Activated CD8-positive, alpha-beta T cell treated with anti-CD3 and anti-CD28 coated beads, Interleukin-2, amount 10 ng/mL, durations not matched to agents 7 days and 5 days (primary cell): ENCODE measurements at regions of chr5 and their contacts with region 1.

Region 1: GRCh38 chr5:148998174-148998797 is 64.6 kb downstream of the SH3TC2 start:
- DNase-seq: peak; percentile 51
- ATAC-seq: peak; percentile 51
- H3K4me3 Mint-ChIP-seq: no peak overlapping the region
- H3K27ac Mint-ChIP-seq: no peak overlapping the region
- H3K4me1 Mint-ChIP-seq: no peaks in the 10 kb centered on the region
- H3K27me3 Mint-ChIP-seq: peaks cover 31% of the 10 kb centered on the region

Region 2: DNA sequence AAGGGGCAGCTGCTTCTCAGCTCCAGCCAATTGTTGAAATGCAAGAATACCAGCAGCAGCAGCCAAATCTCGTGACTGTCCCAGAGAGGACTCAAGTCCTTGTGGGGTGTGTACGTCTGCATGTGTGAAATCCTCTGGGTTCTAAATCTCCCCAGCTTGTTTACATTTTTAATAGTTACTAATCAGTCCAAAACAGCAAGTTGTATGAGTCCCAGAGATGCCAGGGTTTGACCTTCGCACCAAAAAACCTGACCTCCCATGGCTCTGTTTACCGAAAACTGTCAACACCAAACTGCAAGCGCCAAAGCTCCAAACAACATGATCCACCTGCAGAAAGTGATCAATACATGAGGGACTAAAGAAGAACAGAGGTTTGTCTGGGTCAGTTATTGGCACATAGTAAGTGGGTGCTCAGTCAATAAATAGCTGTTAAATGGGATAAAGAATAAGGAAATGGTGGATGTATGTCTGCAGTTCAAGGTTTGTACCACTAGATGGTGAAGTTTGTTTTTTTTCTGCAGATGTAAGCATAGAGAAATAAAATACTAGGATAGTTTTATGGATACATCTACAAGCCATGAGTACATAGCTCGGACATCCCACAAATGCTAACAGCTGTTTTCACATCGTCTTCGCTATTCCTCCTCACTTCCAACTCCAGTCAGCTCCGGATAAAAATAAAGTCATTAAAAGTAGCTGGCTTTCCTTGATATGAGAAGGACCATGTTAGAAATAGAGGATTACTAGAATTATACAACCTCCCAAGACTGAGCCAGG is 257.1 kb before region 1 on chr5:
- CTCF ChIA-PET with region 1: interaction called, 94 read pairs
- POLR2A ChIA-PET with region 1: no interaction called
- DNase-seq: no peak
- ATAC-seq: no peak
- H3K4me3 Mint-ChIP-seq: no peak overlapping the region
- H3K27ac Mint-ChIP-seq: no peak overlapping the region
- H3K4me1 Mint-ChIP-seq: peaks cover 2% of the 10 kb centered on the region
- H3K27me3 Mint-ChIP-seq: peaks cover 19% of the 10 kb centered on the region

Region 3: GRCh38 chr5:149015126-149015525 is 16.8 kb after region 1 on chr5:
- CTCF ChIA-PET with region 1: no interaction called
- POLR2A ChIA-PET with region 1: no interaction called
- DNase-seq: no peak
- ATAC-seq: no peak
- H3K4me3 Mint-ChIP-seq: no peak overlapping the region
- H3K27ac Mint-ChIP-seq: no peak overlapping the region
- H3K4me1 Mint-ChIP-seq: no peaks in the 10 kb centered on the region
- H3K27me3 Mint-ChIP-seq: peaks cover 5% of the 10 kb centered on the region

Region 4: GRCh38 chr5:149035372-149035790 is 37.1 kb after region 1 on chr5:
- CTCF ChIA-PET with region 1: interaction called, 13 read pairs
- POLR2A ChIA-PET with region 1: no interaction called
- DNase-seq: peak; percentile 79
- ATAC-seq: peak; percentile 89
- H3K4me3 Mint-ChIP-seq: no peak overlapping the region
- H3K27ac Mint-ChIP-seq: no peak overlapping the region
- H3K4me1 Mint-ChIP-seq: peaks cover 30% of the 10 kb centered on the region
- H3K27me3 Mint-ChIP-seq: peaks cover 6% of the 10 kb centered on the region